ENCODE measurements at regions of chr7 and their contacts with region 1.

Region 1: DNA sequence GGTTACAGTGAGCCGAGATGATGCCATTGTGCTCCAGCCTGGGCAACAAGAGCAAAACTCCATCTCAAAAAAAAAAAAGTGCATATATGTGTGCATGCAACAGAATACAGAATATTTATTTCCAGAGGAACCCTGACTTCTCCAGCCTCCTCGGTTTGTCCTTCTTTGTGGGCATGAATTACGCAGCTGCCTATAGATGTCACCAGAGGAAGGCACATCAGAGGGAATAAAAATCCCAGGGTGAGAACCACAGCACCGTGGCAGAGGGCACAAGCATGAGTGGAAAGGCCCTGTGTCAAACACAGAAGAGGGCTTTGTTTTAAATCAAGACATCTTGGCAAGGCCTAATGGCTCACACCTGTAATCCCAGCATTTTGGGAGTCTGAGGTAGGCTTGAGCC is 24.4 kb upstream of the OCM2 start:
- H3K4me3 ChIP-seq: no peak overlapping the region
- H3K27ac ChIP-seq: no peak overlapping the region
- H3K4me1 ChIP-seq: no peaks in the 10 kb centered on the region
- CTCF ChIP-seq: no peak

Region 2: GRCh38 chr7:97845622-97846203 is 168.6 kb before region 1 on chr7:
- CTCF ChIA-PET with region 1: interaction called, 27 read pairs
- POLR2A ChIA-PET with region 1: no interaction called
- H3K4me3 ChIP-seq: no peak overlapping the region
- H3K27ac ChIP-seq: no peak overlapping the region
- H3K4me1 ChIP-seq: no peaks in the 10 kb centered on the region
- CTCF ChIP-seq: no peak

Region 3: GRCh38 chr7:98000356-98000755 is 14.0 kb before region 1 on chr7:
- CTCF ChIA-PET with region 1: interaction called, 10 read pairs
- POLR2A ChIA-PET with region 1: no interaction called
- H3K4me3 ChIP-seq: no peak overlapping the region
- H3K27ac ChIP-seq: no peak overlapping the region
- H3K4me1 ChIP-seq: no peaks in the 10 kb centered on the region
- CTCF ChIP-seq: no peak

Measured in HEK293 (cell line).